Ascending aorta (tissue), 2 donors: ENCODE measurements at regions of chr1 and their contacts with region 1.

Region 1: DNA sequence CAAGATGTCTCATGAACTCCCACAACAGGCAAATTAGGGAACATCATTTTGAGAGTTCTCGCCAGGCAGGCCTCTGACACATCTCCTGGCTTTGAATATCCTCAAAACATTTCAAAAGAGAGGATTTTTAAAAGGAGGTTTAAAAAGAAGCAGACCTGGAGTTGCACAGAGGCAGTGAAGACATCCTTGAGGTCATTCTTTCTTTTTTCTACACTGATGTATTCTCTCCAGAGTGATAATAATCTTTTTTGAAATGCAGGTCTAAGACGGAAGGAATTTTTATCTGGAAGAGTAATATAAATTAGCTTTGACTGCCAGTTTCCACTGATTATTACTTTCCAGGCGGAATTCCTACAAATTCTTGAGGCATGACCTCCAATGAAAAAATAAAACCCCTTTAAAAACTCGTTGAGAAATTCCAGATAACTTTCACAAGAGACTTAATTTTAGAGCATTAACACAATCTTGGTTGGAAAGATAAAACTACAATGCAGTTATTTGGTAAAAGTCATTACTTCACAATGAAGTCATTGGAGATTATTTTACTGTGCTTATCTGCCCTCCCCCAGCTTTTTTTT is 125.0 kb downstream of the LYPLAL1 start:
- DNase-seq: no peak
- H3K4me3 ChIP-seq: no peak overlapping the region
- H3K27ac ChIP-seq: peak overlapping the region; percentile 76 to 77
- H3K4me1 ChIP-seq: peaks cover 4 to 31% of the 10 kb centered on the region in 2 donors
- H3K27me3 ChIP-seq: no peaks in the 10 kb centered on the region
- CTCF ChIP-seq: no peak

Region 2: GRCh38 chr1:219189021-219189824 is 109.4 kb before region 1 on chr1:
- intact Hi-C with region 1: loop called (anchors 5 kb)
- DNase-seq: no peak
- H3K4me3 ChIP-seq: peak overlapping the region in 1 of 2 donors; percentile 27
- H3K27ac ChIP-seq: peak overlapping the region; percentile 75 to 82
- H3K4me1 ChIP-seq: peaks cover 0 to 8% of the 10 kb centered on the region in 2 donors
- H3K27me3 ChIP-seq: no peaks in the 10 kb centered on the region
- CTCF ChIP-seq: no peak

Region 3: GRCh38 chr1:219236933-219237610 is 61.6 kb before region 1 on chr1:
- intact Hi-C with region 1: no loop called
- DNase-seq: no peak
- H3K4me3 ChIP-seq: no peak overlapping the region
- H3K27ac ChIP-seq: no peak overlapping the region
- H3K4me1 ChIP-seq: no peaks in the 10 kb centered on the region
- H3K27me3 ChIP-seq: no peaks in the 10 kb centered on the region
- CTCF ChIP-seq: no peak

Region 4: GRCh38 chr1:219446288-219446687 is 147.6 kb after region 1 on chr1:
- intact Hi-C with region 1: no loop called
- DNase-seq: no peak
- H3K4me3 ChIP-seq: no peak overlapping the region
- H3K27ac ChIP-seq: no peak overlapping the region
- H3K4me1 ChIP-seq: no peaks in the 10 kb centered on the region
- H3K27me3 ChIP-seq: no peaks in the 10 kb centered on the region
- CTCF ChIP-seq: no peak